IMR-90 (cell line): ENCODE measurements at regions of chr6 and their contacts with region 1.

Region 1: GRCh38 chr6:24831771-24832716 is 33.3 kb upstream of the ARMH2 start:
- DNase-seq: peak; percentile 40
- ATAC-seq: peak; percentile 87
- H3K4me3 ChIP-seq: no peak overlapping the region
- H3K27ac ChIP-seq: peak overlapping the region; percentile 64; the same call in 1 of the 2 replicates
- H3K4me1 ChIP-seq: peaks cover 8% of the 10 kb centered on the region
- H3K27me3 ChIP-seq: no peaks in the 10 kb centered on the region
- CTCF ChIP-seq: no peak
- POLR2A ChIP-seq: no peak
- RAD21 ChIP-seq: no peak

Region 2: DNA sequence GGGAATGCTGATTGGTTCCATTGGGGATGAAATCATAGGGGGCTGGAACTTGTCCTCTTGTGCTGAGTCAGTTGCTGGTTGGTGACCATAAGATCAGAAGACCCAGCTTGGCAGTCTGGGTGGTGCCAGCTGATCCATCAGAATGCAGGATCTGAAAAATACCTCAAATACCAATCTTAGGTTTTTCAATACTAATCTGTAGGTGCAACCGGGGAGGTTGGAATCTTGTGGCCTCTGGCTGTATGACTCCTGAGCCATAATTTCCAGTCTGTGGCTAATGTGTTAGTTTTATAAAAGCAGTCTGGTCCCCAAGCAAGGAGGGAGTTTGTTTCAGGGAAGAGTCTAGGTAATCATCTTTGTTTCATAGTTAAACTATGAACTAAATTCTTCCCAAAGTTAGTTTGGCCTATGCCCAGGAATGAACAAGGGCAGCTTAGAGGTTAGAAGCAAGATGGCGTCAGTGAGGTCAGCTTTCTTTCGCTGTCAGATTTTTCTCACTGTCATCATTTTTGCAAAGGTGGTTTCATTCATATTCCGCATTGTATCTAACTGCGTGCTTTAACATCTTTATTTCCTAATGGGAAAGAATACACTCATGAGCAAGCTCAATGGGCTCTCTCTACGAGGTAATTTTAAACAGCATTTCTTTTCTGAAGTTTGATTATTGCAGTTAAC is 35.3 kb before region 1 on chr6:
- CTCF ChIA-PET with region 1: no interaction called
- POLR2A ChIA-PET with region 1: no interaction called
- dilution Hi-C with region 1: no loop called
- in situ Hi-C with region 1: no loop called
- intact Hi-C with region 1: loop called (anchors 5 kb)
- DNase-seq: no peak
- ATAC-seq: no peak
- H3K4me3 ChIP-seq: no peak overlapping the region
- H3K27ac ChIP-seq: no peak overlapping the region
- H3K4me1 ChIP-seq: peaks cover 2% of the 10 kb centered on the region; the same call in 1 of the 2 replicates
- H3K27me3 ChIP-seq: no peaks in the 10 kb centered on the region
- CTCF ChIP-seq: no peak
- POLR2A ChIP-seq: no peak
- RAD21 ChIP-seq: no peak

Region 3: DNA sequence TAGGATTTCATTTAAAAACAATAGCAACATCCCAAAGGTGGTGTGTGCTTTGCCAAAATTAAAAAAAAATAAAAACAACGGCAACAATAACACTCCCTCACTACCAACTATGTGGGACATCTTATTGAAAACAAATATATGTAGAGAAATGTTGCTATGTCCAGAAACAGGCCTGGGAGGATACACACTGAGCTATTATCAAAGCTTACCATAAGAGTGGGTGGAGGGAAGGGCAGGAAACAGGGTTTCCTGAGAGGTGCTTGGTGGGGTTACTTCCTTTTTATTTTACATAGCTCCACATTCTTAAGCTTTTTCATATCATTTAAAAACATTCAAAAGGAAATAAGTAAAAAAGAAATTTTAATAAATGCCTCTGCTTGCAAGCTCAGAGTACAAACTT is 253.7 kb after region 1 on chr6:
- CTCF ChIA-PET with region 1: no interaction called
- POLR2A ChIA-PET with region 1: no interaction called
- dilution Hi-C with region 1: loop called (anchors 25 kb)
- in situ Hi-C with region 1: no loop called
- intact Hi-C with region 1: no loop called
- DNase-seq: no peak
- ATAC-seq: no peak
- H3K4me3 ChIP-seq: no peak overlapping the region
- H3K27ac ChIP-seq: no peak overlapping the region
- H3K4me1 ChIP-seq: peaks cover 7% of the 10 kb centered on the region; the same call in 1 of the 2 replicates
- H3K27me3 ChIP-seq: no peaks in the 10 kb centered on the region
- CTCF ChIP-seq: no peak
- POLR2A ChIP-seq: no peak
- RAD21 ChIP-seq: no peak